Left colon (tissue), 2 donors: ENCODE measurements at regions of chr3 and their contacts with region 1.

Region 1: DNA sequence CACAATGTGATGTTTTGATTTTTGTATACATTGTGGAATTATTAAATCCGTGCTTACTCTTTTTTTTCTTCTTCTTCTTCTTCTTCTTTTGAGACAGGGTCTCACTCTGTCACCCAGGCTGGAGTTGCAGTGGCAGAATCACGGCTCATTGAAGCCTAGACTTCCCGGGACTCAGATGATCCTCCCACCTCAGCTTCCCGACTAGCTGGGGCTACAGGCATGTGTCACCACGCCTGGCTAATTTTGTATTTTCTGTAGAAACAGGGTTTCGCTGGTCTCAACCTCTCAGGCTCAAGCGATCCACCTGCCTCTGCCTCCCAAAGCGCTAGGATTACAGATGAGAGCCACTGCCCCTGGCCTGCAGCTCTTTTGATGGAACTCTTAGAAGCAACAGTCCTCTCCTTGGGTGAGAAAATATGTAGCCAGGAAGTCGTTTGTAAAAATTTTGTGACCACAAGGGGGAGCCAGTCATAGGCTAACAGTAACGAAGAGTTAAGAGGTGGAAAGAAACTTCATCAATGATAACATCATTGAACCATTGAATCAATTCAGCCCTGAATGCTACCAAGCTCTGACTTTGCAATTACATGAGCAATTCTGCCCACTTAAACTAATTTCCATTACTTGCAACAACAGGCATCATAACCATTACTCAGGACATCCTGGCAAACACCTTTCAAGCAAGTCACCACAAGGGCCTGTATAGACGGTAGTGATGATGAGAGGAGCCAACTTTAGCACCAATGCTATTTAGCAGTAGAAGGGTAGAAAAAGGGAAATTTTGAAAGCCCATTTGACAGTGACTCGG is 16.7 kb upstream of the CMTM7 start:
- DNase-seq: peak in 1 of 2 donors; percentile 61
- ATAC-seq: peak; percentile 67

Region 2: GRCh38 chr3:32106280-32106928 is 268.6 kb before region 1 on chr3 and contains the start of gene GPD1L:
- intact Hi-C with region 1: no loop called
- DNase-seq: peak; percentile 95 to 96
- ATAC-seq: peak; percentile 92
- total RNA-seq, gene GPD1L: 91.1 to 93.1 TPM

Region 3: GRCh38 chr3:32467333-32468070 is 92.5 kb after region 1 on chr3:
- intact Hi-C with region 1: loop called in 1 of 2 experiments (anchors 2 kb)
- DNase-seq: peak; percentile 42 to 80
- ATAC-seq: peak; percentile 89

Region 4: DNA sequence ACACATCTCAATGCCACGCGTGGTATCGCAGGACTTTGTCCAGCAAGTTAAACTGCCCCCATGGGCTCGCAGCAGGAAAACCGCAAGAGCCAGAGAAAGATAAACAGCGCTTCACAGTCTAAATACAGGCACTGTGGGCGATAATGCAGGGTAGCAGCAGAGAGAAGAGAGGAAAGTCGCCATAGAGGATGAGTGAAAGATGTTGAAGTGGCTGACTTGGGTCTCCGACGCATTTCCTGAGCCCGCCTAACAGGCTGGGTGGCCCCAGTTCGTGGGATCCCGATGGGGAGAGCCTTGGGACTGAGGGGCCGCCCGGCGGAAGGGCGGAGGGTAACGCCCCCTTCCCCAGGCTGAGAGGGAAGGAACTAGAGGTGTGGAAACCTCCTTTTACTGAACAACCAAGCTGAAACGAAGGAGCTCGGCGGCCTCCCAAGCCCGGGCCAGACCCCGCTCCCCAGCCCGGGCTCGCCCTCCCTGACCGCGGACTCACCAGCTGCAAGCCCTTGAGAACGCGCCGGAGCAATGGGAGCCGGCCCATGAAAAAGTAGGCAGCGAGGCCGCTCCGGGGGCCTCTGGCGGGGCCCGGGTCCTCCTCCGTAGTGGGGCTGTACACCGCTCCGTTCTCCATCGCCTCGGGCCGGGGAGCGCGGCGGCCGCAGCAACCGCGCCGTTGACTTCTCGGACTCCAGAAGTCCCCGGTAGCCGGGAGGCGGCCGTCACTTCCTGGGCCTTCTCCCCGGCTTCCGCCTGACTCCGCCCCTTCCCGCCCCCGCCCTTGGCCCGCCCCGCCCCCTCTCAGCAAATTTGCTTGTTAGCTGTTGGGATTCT is 127.3 kb after region 1 on chr3 and contains the start of gene CMTM6:
- intact Hi-C with region 1: no loop called
- DNase-seq: peak; percentile 82 to 89
- ATAC-seq: peak; percentile 95
- total RNA-seq, gene CMTM6: 61.3 to 66.7 TPM

Region 5: GRCh38 chr3:32544894-32545293 is 169.9 kb after region 1 on chr3:
- intact Hi-C with region 1: no loop called
- DNase-seq: no peak
- ATAC-seq: no peak

Region 6: DNA sequence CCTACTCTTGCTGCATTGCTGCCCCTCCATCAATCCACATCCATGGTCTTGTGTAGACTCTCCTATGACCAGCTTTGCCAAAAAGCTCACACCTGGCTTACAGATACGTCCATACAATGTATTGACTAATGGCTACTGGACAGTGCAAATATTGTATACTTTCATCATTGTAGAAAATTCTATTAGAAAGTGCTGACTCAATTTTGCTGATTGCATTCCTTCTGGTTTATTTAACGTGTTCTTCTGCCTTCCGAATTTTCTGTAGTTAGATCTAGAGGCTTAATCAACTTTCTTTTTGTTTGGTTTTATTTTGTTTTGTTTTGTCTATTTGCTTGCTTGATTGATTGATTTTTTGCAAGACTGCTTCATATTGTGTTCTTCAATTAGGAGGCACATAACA is 280.2 kb after region 1 on chr3:
- intact Hi-C with region 1: loop called in 1 of 2 experiments (anchors 10 kb)
- DNase-seq: no peak
- ATAC-seq: no peak